Posterior vena cava (tissue), 2 donors: ENCODE measurements at regions of chr10 and their contacts with region 1.

Region 1: GRCh38 chr10:122142641-122143237 is 128.4 kb upstream of the BTBD16 start:
- DNase-seq: no peak

Region 2: GRCh38 chr10:121662945-121663917 is 479.5 kb before region 1 on chr10:
- intact Hi-C with region 1: no loop called
- DNase-seq: no peak

Region 3: DNA sequence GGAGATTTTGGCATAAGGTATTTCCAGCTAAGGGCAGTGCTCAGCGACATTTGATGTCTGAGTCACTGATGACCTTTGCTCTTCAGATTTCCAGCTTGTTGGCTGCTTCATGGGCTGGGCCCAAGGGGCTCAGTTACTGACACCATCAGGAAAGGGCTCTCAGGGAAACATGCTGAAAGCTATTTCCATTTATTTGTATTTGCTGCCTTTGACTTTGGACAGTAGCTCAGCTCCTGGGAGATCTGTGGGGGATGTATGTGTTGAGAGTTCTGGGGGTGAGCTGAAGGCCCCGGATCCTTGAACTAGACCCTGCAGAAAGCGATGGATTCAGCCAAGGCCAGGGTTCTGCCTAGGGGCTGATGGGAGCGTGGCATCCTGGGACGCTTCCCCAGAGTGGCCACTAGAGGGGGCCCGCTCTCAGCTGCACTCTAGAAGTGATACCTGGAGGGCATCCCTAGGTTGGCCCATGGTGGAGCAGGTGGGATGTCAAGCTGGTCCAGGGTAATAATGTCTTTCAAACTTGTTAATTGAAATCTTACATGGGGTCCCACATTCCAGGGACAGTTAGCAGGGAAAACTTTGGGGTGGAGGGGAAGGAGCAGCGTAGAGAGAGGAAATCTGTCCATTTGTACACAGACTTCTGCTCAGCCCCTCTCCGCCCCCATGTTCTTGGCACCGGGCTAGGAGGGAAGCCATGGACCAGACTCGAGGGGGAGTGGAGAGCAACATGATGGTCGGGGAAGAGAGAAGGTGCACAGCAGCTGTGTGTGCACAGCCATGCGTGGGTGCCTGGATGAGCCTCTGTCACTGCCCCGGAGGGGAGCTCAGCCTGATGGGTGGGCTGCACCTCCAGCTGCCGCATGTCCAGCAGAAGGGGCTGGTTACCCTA is 125.4 kb after region 1 on chr10:
- intact Hi-C with region 1: loop called in 1 of 2 experiments (anchors 10 kb)
- DNase-seq: no peak